Activated CD4-positive, alpha-beta T cell treated with anti-CD3 and anti-CD28 coated beads, Interleukin-2, amount 10 ng/mL, durations not matched to agents 24 days and 14 days (primary cell): ENCODE measurements at regions of chr15 and their contacts with region 1.

Region 1: GRCh38 chr15:100602064-100602822 is at the starts of genes ASB7 and LINS1:
- DNase-seq: peak; percentile 100
- H3K4me3 Mint-ChIP-seq: no peak within 1 kb of the TSS
- H3K27ac Mint-ChIP-seq: no peak within 1 kb of the TSS
- H3K4me1 Mint-ChIP-seq: peaks cover 54% of the 10 kb centered on the region
- H3K27me3 Mint-ChIP-seq: no peaks in the 10 kb centered on the region
- total RNA-seq, gene ASB7: 17.8 and 18.0 TPM in 2 replicates
- total RNA-seq, gene LINS1: 63.9 and 64.9 TPM in 2 replicates

Region 2: DNA sequence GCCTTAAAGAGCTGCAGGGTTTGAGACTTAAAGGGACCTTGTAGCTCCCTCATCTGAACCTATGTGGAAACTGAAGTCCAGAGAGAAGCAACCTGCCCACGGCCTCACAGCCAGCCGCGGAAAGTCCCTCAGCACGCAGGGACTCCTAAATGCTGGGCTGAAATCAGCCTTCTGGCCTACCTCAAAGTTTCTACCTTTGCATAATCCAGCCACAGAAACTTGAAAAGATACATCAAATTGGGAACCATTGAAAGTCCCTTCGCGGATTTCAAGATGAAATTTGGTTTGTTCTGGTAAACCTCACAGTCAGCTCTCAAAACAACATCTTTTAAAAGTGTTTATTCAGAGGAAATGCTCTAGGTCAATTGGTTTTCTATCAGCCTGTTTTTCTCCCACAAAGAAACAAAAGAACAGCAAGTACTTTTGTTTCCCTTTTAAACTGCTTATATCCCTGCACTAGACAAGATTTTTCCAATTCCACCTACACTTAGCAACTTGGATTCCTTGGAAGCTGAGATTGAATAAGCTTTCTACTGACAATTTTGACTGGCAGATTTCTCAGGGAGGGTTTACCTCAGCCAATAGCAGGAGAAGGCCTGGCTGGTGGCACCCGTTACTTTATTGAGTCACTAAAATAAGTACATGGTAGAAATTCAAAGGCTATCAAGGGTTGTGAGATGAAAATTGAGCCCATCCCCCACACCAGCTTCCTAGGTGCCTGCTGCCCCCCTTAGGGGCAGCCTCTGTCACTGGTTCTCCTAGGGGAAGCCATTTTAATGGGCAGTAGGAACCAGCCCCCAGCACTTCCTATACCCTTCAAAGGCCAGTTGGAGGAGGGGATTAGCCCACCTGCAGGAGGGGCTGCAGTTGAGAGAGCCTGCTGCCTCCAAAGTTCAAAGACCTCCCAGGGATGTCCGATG is 431.7 kb before region 1 on chr15:
- intact Hi-C with region 1: loop called (anchors 5 kb)
- DNase-seq: peak; percentile 73
- H3K4me3 Mint-ChIP-seq: peak overlapping the region; percentile 30
- H3K27ac Mint-ChIP-seq: peak overlapping the region; percentile 78
- H3K4me1 Mint-ChIP-seq: peaks cover 8% of the 10 kb centered on the region
- H3K27me3 Mint-ChIP-seq: no peaks in the 10 kb centered on the region

Region 3: GRCh38 chr15:100341662-100342560 is 260.3 kb before region 1 on chr15 and contains the start of gene ADAMTS17:
- intact Hi-C with region 1: loop called (anchors 1 kb)
- DNase-seq: peak; percentile 98
- H3K4me3 Mint-ChIP-seq: peak within 1 kb of the TSS; percentile 70
- H3K27ac Mint-ChIP-seq: no peak within 1 kb of the TSS
- H3K4me1 Mint-ChIP-seq: peaks cover 17% of the 10 kb centered on the region
- H3K27me3 Mint-ChIP-seq: peaks cover 46% of the 10 kb centered on the region
- total RNA-seq, gene ADAMTS17: 0.47 and 1.1 TPM in 2 replicates

Region 4: DNA sequence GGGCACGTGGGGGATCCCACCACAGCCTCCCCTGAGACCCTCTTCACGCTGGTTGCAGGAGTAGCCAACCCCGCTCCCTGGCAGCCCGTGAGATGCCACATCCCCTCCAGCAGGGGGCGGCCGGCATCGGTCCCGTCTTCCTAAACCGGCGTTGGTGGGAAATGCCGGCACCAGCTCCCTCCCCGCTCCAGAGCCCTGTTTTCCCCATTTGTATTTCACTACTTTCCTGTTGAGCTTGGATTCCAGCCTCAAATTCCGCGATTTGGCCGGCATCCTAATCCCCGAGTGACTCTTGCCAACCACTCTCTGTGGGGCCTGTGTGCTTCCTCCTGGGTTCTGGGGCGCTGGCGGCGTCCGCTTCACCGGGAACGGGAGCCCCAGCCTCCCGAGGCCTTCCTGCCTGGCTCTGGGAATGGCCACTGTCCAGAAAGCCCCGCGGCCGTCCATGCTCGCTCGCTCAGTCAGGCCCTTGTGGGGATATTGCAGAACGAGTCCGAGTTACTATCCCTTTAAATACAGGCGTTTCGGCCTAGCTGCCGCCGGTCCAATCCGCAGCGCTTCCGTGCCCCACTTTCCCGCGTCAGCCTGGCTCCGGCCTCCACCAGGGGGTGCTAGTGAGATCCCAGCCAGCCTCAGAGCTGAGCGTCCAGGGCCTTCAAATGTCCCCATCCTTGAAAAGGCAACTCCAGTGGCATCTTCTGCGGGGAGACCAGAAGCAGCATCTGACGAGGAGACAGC is 252.4 kb before region 1 on chr15:
- intact Hi-C with region 1: loop called (anchors 1 kb)
- DNase-seq: peak; percentile 97
- H3K4me3 Mint-ChIP-seq: peak overlapping the region; percentile 93
- H3K27ac Mint-ChIP-seq: peak overlapping the region; percentile 84
- H3K4me1 Mint-ChIP-seq: peaks cover 9% of the 10 kb centered on the region
- H3K27me3 Mint-ChIP-seq: peaks cover 20% of the 10 kb centered on the region

Region 5: GRCh38 chr15:100429116-100429728 is 173.0 kb before region 1 on chr15:
- intact Hi-C with region 1: no loop called
- DNase-seq: no peak
- H3K4me3 Mint-ChIP-seq: no peak overlapping the region
- H3K27ac Mint-ChIP-seq: no peak overlapping the region
- H3K4me1 Mint-ChIP-seq: no peaks in the 10 kb centered on the region
- H3K27me3 Mint-ChIP-seq: peaks cover 3% of the 10 kb centered on the region

Region 6: DNA sequence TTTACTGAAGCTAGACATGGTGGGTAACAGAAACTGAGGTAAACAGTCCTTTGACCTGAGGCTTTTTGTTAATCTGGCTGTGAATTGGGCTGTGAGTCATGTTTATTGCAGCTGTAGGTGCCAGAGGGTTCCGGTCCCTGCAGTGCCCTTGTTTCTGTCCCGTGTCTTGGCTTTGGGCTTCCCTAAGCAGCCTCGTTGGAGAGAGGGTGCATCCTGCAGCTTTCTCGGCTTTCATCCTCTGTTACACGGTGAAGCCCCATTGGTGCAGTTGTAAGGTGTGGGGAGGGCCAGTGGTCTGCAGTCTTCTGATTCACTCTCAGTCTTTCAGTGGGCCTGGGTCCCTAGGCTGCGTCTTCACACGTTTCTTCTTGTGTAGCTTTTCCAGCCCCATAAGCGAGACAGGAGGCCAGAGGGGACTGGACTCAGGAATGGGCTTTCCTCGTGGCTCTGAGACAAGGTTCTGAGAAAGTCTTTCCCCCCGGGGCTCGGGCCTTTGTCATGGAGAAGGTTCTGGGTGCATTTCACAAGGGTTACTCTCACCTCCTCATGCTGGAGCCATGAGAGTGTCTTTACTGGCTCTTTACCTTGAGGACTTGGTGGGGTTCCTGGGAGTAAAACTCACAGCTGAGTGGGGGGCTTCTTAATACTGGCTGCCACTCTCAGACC is 33.3 kb after region 1 on chr15:
- intact Hi-C with region 1: no loop called
- DNase-seq: no peak
- H3K4me3 Mint-ChIP-seq: no peak overlapping the region
- H3K27ac Mint-ChIP-seq: no peak overlapping the region
- H3K4me1 Mint-ChIP-seq: peaks cover 16% of the 10 kb centered on the region
- H3K27me3 Mint-ChIP-seq: no peaks in the 10 kb centered on the region